Endothelial cell of umbilical vein (primary cell): ENCODE measurements at regions of chr9 and their contacts with region 1.

Region 1: DNA sequence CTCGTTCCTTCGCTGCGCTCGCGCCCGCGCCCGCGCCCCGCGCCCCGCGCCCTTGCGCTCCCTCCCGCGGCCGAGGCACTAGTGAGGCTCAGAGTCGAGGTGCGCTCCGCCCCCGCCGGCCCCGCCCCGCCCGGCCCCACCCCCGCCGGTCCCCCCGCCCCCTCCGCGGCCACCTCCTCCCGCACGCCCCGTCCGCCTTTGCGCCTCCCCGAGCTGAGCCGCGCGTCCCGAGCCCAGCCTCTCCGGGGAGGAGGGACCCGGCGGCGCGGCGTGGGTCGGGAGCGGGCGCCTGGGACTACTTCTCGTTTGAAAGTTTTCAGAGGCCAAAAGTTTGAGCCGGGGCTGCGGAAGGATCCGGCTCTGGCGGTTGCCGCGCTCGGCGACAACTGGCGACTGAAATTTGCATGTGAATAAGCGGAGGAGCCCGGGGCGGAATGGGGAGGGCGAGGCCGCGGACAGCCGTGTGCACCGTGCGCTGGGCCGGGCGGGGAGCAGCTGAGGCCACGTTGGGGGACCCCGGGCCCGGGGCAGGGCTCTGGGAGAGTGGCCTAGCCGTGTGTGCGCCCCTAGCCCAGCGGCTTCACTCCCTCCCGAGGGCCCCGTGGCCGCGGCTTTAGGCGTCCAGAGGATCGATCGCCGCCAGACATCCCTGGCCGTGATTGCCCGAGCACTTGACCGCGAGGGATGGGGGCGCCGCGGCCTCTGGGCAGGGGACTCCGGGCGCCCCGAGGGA is at the start of gene NOTCH1:
- DNase-seq: peak; percentile 88
- H3K4me3 ChIP-seq: peak within 1 kb of the TSS; percentile 81 to 98 (median 91)
- H3K27ac ChIP-seq: peak within 1 kb of the TSS; percentile 68
- H3K4me1 ChIP-seq: peaks cover 45% of the 10 kb centered on the region
- H3K27me3 ChIP-seq: no peaks in the 10 kb centered on the region
- CTCF ChIP-seq: no peak
- POLR2A ChIP-seq: peak; percentile 6
- total RNA-seq, gene NOTCH1: 153 and 161 TPM in 2 replicates

Region 2: DNA sequence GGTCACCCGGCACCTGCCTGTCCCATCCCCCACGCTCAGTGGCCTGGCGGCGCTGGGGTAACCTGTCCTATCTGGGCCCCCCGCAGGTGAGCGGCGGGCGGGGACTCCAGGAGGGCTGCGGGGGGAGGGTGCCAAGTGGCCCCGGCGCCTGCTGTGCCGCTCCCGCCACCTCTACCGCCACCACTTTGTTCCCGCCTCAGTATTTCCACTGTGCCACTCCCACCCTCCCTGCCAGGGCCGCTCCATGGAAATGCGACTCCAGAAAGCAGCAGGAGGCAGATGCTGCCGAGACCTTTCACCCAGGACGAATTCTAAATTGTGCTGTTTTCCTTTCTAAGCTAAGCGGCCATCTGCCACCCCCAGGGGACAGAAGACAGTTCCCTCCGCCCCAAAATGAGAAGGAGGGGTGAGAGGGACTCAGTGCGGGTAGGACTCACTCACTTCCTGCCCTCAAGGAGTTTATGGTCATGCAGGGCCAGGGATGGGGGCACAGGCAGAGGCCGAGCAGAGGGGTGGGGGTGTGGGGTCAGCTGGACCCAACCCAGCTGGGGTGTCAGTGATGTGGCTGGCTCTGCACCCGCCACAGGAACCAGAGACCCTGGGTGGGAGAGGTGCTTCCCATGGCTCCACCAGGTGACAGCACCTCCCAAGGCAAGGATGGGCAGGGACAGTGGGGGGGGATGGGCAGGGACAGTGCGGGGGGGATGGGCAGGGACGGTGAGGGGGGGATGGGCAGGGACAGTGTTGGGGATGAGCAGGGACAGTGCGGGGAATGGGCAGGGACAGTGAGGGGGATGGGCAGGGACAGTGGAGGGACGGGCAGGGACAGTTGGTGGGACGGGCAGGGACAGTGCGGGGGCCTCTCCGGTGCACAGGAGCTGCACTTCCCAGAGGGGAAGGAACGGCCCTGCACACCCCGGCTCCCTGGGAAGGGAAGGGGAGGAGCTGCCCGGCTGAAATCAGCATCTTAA is 18.1 kb before region 1 on chr9:
- CTCF ChIA-PET with region 1: interaction called, 4 read pairs
- POLR2A ChIA-PET with region 1: interaction called, 9 read pairs
- dilution Hi-C with region 1: no loop called
- intact Hi-C with region 1: loop called (anchors 2 kb)
- DNase-seq: no peak
- H3K4me3 ChIP-seq: no peak overlapping the region
- H3K27ac ChIP-seq: peak overlapping the region; percentile 89
- H3K4me1 ChIP-seq: peaks cover 45% of the 10 kb centered on the region
- H3K27me3 ChIP-seq: no peaks in the 10 kb centered on the region
- CTCF ChIP-seq: no peak
- POLR2A ChIP-seq: no peak

Region 3: GRCh38 chr9:136614372-136614922 is 68.3 kb after region 1 on chr9:
- CTCF ChIA-PET with region 1: interaction called, 5 read pairs
- POLR2A ChIA-PET with region 1: interaction called, 6 read pairs
- dilution Hi-C with region 1: no loop called
- intact Hi-C with region 1: loop called (anchors 1 kb)
- DNase-seq: peak; percentile 94
- H3K4me3 ChIP-seq: no peak overlapping the region
- H3K27ac ChIP-seq: peak overlapping the region; percentile 97
- H3K4me1 ChIP-seq: peaks cover 22% of the 10 kb centered on the region
- H3K27me3 ChIP-seq: no peaks in the 10 kb centered on the region
- CTCF ChIP-seq: no peak
- POLR2A ChIP-seq: no peak